ENCODE measurements at regions of chr1 and their contacts with region 1.

Region 1: DNA sequence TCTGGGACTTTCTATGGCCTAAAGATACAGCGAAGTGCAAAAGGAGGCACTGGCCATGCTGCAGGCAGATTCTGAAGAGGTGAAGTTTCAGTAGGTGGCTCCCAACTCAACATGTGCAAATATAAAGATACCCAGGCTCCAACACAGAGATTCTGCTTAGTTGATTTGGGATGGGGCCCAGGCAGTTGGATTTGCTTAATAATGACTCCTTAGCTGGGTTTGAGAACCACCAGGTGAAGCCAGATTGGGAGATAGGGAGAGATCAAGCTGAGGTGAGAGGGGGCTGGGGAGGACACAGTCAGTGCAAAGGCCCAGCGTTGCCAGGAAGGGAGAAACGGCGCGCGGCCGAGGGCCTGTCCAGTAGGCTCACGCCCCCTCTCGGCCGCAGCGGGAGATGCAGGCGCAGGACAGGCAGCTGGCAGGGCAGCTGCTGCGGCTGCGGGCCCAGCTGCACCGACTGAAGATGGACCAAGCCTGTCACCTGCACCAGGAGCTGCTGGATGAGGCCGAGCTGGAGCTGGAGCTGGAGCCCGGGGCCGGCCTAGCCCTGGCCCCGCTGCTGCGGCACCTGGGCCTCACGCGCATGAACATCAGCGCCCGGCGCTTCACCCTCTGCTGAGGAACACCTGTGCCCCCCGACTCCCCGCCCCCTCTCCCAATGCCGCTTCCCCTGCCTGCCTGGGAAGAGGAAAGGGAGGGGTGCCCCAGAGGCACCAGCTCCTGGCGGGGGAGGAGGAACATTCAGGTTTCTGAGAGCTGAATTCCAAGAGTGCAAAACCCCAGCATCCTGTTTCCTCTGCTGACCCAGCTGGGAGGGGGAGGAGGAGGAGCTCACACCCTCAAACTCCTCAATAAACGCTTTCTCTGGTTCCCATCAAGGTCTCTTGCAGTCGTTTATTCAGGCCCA is 1.2 kb downstream of the FAM167B start:
- DNase-seq: peak; percentile 89
- H3K4me3 ChIP-seq: peak overlapping the region; percentile 43
- H3K27ac ChIP-seq: peak overlapping the region; percentile 99
- H3K4me1 ChIP-seq: peaks cover 80% of the 10 kb centered on the region
- CTCF ChIP-seq: peak; percentile 93

Region 2: GRCh38 chr1:32215629-32216480 is 32.4 kb before region 1 on chr1:
- CTCF ChIA-PET with region 1: interaction called, 4 read pairs
- POLR2A ChIA-PET with region 1: interaction called, 3 read pairs
- intact Hi-C with region 1: loop called (anchors 2 kb)
- DNase-seq: peak; percentile 81
- H3K4me3 ChIP-seq: no peak overlapping the region
- H3K27ac ChIP-seq: no peak overlapping the region
- H3K4me1 ChIP-seq: peaks cover 11% of the 10 kb centered on the region
- CTCF ChIP-seq: peak; percentile 95

Region 3: DNA sequence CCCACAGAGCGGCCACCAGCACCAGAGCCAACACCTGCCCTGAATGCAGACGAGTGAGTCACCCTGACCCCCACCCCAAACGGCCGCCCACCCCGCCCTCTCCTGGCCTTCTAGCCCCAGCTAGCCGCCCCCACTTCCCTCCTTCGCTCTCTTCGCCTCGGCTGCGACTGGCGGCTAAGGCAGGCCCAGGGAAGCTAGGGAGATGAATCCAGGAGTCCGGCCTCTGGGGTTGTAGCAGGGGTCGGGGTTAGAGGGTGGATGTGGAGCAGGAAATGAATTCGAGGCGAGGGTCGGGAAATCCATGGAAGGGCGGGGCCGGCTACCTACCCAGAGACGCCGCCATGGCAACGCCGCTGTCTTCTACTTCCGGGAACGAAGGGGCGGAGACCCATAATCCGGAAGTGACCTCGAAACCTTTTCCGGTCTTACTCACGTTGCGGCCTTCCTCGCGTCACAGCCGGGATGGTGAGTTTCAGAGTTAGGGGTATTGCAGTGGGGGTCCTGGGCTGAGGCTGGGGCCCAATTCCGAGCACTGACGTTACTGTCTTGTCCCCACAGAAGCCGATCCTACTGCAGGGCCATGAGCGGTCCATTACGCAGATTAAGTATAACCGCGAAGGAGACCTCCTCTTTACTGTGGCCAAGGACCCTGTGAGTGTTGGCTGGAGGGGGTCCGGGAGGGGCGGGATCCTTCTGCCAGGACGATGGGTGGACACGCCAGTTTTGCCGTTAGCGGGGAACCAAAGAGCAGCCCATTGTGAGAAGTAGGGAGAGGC is 26.1 kb before region 1 on chr1 and contains the starts of genes EIF3I and TMEM234:
- CTCF ChIA-PET with region 1: interaction called, 4 read pairs
- POLR2A ChIA-PET with region 1: interaction called, 3 read pairs
- intact Hi-C with region 1: loop called (anchors 2 kb)
- DNase-seq: peak; percentile 93
- H3K4me3 ChIP-seq: peak within 1 kb of the TSS; percentile 96
- H3K27ac ChIP-seq: peak within 1 kb of the TSS; percentile 41
- H3K4me1 ChIP-seq: peaks cover 33% of the 10 kb centered on the region
- CTCF ChIP-seq: no peak
- total RNA-seq, gene EIF3I: 144 and 182 TPM in 2 replicates
- total RNA-seq, gene TMEM234: 14.9 and 17.1 TPM in 2 replicates

Region 4: DNA sequence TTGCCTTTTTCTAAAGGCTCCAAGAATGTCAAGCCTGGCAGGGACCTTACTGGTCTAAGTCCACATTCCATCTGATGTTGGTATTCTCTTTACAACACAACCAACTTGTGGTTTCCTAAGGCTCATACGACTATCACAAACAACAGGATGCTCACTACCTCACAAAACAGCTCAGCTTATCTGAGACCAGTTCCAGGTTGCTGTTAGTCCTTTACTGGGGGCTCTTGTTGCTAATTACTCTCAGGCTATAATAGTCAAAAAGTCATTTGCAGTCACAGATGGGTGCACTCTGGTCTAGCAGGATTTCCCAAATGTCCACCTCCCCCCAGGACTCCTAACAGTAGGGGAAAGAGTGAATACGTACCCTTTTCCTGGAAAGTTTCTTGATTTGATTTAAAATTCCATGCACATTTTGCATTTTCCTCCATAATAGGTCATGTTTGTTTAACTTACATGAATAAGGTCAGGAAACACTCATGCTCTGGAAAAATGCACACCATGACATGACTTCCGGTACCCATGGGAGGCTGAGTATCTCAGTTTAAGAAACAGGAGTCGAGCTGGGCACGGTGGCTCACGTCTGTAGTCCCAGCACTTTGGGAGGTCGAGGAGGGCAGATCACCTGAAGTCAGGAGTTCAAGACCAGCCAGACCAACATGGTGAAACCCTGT is 18.8 kb after region 1 on chr1:
- CTCF ChIA-PET with region 1: no interaction called
- POLR2A ChIA-PET with region 1: interaction called, 79 read pairs
- intact Hi-C with region 1: loop called (anchors 1 kb)
- DNase-seq: peak; percentile 60
- H3K4me3 ChIP-seq: peak overlapping the region; percentile 25
- H3K27ac ChIP-seq: peak overlapping the region; percentile 75
- H3K4me1 ChIP-seq: peaks cover 72% of the 10 kb centered on the region
- CTCF ChIP-seq: no peak

Region 5: DNA sequence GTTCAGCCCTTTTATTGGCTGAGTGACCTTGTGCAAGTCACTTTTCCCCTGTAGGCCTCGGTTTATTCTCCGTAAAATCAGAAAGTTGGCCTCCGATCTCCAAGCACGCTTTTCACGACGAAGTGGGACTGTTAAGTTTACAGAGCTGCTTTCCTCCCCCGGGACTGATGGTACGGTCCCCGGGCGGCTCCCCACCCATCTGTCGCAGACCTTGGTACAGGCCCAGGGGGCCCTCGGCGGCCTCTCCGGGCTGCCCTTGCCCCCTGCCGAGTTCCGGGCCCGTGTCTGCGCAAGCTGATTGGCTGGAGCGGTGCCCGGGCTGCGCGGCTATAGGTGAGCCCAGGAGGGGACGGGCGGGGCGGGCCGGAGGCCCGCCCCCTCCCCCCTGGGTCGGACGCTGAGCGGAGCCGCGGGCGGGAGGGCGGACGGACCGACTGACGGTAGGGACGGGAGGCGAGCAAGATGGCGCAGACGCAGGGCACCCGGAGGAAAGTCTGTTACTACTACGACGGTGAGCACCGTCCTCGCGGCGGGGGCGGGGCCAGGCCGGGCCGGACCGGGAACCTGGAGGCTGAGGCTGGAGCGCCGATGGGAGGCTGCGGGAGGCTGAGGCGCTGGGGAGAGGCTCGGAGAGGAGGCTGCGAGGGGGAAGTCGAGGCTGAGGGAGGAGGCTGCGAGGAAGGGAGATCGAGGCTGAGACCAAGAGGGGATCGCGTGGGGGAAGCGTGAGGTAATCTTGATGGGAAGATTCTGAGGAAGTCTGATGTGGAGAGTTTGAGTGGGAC is 43.7 kb after region 1 on chr1 and contains the start of gene HDAC1:
- CTCF ChIA-PET with region 1: interaction called, 6 read pairs
- POLR2A ChIA-PET with region 1: interaction called, 70 read pairs
- intact Hi-C with region 1: loop called (anchors 1 kb)
- DNase-seq: peak; percentile 99
- H3K4me3 ChIP-seq: peak within 1 kb of the TSS; percentile 91
- H3K27ac ChIP-seq: peak within 1 kb of the TSS; percentile 78
- H3K4me1 ChIP-seq: peaks cover 58% of the 10 kb centered on the region
- CTCF ChIP-seq: no peak
- total RNA-seq, gene HDAC1: 259 and 270 TPM in 2 replicates